Activated T-helper 2 cell treated with anti-CD3 and anti-CD28 coated beads, Interferon-gamma antibody, Interleukin-2, Interleukin-4, amounts not matched to agents 10 μg/mL and 5 μg/mL and 100 μg/mL, durations not matched to agents 14 hours and 24 hours and 36 hours (primary cell): ENCODE measurements at regions of chr12 and their contacts with region 1.

Region 1: GRCh38 chr12:130013771-130014484 is 110.1 kb upstream of the TMEM132D start:
- DNase-seq: peak; percentile 34
- H3K4me3 Mint-ChIP-seq: no peak overlapping the region
- H3K27ac Mint-ChIP-seq: no peak overlapping the region
- H3K4me1 Mint-ChIP-seq: no peaks in the 10 kb centered on the region
- H3K27me3 Mint-ChIP-seq: no peaks in the 10 kb centered on the region

Region 2: DNA sequence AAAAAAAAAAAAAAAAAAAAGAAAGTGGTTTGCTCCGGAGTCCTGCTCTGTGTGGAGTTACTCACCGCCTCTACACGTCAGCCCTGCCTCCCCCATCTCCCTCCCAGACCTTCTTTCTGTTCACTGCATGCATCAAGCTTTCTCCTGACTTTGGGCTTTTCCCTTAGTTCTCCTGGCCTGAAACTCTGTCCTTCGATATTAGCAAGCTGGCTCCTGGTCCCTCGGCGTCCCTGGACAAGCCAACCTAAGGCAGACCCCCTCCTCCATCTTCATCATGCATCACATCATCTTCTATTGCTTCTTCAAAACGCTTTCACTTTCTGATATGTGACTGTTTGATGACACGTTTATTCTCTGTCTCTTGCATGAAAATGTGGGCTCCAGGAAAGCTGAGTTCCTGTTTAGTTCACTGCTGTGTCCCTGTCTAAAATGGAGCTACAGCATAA is 1230.8 kb before region 1 on chr12:
- intact Hi-C with region 1: loop called (anchors 10 kb)
- DNase-seq: no peak
- H3K4me3 Mint-ChIP-seq: peak overlapping the region; percentile 51
- H3K27ac Mint-ChIP-seq: peak overlapping the region; percentile 90
- H3K4me1 Mint-ChIP-seq: peaks cover 8% of the 10 kb centered on the region
- H3K27me3 Mint-ChIP-seq: no peaks in the 10 kb centered on the region

Region 3: GRCh38 chr12:129659927-129660326 is 354.0 kb before region 1 on chr12:
- intact Hi-C with region 1: no loop called
- DNase-seq: no peak
- H3K4me3 Mint-ChIP-seq: no peak overlapping the region
- H3K27ac Mint-ChIP-seq: no peak overlapping the region
- H3K4me1 Mint-ChIP-seq: no peaks in the 10 kb centered on the region
- H3K27me3 Mint-ChIP-seq: no peaks in the 10 kb centered on the region

Region 4: DNA sequence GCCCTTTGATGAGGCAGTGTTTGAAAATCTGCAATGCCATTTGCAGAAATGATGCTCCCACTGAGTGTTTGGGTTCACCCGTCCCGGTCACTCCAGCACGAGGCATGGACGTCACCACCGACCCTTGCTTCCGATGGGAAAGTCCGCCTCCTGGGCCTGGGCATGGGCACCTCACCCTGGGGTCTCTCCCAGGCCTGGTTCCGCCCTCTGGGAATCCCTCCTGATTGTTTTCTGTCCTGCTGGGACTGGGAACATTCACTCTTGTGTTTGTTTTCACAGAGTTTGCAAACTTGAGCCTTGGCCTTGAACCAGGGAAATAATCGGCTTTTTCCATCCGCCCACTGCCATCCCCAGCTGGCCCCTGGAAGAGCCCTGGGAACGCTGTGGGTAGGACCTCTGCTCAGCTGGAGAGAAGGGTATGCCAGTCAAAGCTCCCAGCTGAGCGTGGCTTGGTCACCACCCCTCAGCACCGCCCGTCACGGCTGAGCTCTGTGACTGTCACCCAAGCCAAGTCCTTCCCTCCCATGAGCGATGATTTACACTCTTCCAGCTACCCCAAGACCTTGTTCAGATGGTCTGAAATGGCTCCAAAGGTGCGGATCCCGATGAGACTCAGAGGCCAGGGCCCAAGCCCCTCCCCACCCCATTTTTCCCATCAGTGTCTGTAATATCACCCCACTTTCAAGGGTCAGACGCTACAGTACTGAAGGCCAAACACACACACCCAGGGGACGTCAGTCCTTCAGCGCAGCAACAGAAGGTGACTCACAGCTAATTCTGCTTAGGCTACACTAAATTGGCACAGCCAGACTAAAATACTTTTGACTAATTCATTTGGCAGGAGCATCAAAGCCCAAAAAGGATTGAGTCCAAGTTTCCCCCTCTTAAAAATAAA is 114.2 kb after region 1 on chr12:
- intact Hi-C with region 1: no loop called
- DNase-seq: no peak
- H3K4me3 Mint-ChIP-seq: no peak overlapping the region
- H3K27ac Mint-ChIP-seq: no peak overlapping the region
- H3K4me1 Mint-ChIP-seq: no peaks in the 10 kb centered on the region
- H3K27me3 Mint-ChIP-seq: no peaks in the 10 kb centered on the region